ENCODE measurements at regions of chr19 and their contacts with region 1.

Region 1: GRCh38 chr19:29665215-29665825 is at the start of gene PLEKHF1:
- DNase-seq: peak; percentile 86
- H3K4me3 Mint-ChIP-seq: peak within 1 kb of the TSS; percentile 85
- H3K27ac Mint-ChIP-seq: peak within 1 kb of the TSS; percentile 61
- H3K4me1 Mint-ChIP-seq: peaks cover 62% of the 10 kb centered on the region
- H3K27me3 Mint-ChIP-seq: no peaks in the 10 kb centered on the region
- total RNA-seq, gene PLEKHF1: 28.0 and 30.3 TPM in 2 replicates

Region 2: DNA sequence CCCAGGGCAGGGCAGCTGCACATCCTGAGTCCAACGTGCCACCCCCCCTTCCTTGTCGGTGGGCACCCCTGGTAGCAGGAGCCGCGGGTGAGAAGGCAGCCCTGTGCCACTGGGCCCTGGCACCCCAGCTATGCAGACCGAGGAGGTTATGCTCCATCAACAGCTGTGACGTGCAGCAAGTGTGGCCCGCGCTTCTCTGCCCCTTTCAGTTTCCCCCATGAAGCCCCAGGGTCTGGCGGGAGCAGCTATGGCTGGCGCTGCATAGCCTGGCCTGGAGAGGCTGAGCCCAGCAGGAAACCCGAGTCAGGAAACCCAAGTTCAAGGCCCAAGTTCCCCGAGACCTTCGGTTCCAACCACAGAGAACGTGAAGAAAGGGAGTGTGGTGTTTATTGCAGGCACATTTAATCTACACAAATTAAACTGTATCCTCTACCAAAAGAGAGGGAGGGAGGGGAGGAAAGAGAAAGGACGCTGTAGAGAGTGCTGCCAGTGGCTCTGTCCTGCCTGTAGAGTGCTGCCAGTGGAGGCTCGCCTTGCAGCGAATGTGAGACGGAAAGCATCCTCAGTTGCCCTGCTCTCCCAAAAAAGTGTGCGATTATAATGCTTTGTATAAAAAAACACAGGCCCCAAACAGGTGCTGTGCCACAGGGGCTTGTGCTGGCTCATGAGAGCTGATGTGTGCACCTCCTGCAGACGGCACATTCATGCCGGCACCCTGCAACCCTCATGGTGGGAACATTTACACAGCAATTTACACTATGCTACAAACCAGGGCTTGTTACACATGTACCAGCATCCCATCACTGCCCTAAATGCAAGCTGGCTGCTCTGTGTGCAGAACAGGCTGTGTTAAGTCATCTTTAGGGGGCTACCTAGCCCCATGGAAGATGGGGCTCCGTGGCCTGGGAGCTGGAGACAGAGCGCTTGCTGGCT is 42.9 kb before region 1 on chr19:
- intact Hi-C with region 1: loop called (anchors 1 kb)
- DNase-seq: no peak
- H3K4me3 Mint-ChIP-seq: no peak overlapping the region
- H3K27ac Mint-ChIP-seq: peak overlapping the region; percentile 38
- H3K4me1 Mint-ChIP-seq: peaks cover 46% of the 10 kb centered on the region
- H3K27me3 Mint-ChIP-seq: no peaks in the 10 kb centered on the region

Region 3: DNA sequence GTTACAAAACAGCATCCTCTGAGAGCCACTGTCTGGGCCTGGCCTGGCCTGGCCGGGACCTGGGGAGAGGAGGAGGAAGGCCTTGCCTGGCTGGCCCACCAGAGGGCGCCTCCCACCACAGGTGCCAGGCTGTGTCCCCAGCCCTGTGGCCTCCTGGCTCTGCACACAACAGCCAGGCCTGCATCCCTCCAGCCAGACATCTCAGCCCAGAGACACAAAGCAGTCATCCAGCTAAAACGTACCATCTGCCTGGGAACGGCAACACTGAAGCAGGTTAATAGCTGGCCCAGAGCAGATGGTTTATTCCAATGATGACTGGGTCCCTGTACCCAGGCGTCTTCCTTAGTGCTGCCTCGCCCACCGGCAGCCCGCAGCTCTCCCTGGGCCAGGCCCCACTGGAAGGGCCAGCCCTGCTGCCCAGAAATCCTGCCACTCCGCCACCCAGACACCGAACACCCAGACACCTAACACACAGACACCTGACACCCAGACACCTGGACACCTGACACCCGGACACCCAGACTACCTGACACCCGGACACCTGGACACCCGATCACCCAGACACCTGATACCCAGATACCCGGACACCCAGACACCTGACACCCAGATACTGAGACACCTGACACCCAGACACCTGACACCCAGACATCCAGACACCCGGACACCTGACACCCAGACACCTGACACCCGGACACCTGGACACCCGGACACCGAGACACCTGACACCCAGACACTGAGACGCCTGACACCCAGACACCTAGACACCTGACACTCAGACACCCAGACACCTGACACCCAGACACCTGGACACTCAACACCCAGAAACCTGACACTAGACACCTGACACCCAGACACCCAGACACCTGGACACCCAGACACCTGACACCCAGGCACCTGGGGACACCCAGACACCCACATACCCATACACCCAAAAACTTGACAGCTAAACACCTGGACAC is 29.6 kb after region 1 on chr19:
- intact Hi-C with region 1: loop called (anchors 1 kb)
- DNase-seq: peak; percentile 71
- H3K4me3 Mint-ChIP-seq: no peak overlapping the region
- H3K27ac Mint-ChIP-seq: no peak overlapping the region
- H3K4me1 Mint-ChIP-seq: peaks cover 8% of the 10 kb centered on the region
- H3K27me3 Mint-ChIP-seq: no peaks in the 10 kb centered on the region

Region 4: DNA sequence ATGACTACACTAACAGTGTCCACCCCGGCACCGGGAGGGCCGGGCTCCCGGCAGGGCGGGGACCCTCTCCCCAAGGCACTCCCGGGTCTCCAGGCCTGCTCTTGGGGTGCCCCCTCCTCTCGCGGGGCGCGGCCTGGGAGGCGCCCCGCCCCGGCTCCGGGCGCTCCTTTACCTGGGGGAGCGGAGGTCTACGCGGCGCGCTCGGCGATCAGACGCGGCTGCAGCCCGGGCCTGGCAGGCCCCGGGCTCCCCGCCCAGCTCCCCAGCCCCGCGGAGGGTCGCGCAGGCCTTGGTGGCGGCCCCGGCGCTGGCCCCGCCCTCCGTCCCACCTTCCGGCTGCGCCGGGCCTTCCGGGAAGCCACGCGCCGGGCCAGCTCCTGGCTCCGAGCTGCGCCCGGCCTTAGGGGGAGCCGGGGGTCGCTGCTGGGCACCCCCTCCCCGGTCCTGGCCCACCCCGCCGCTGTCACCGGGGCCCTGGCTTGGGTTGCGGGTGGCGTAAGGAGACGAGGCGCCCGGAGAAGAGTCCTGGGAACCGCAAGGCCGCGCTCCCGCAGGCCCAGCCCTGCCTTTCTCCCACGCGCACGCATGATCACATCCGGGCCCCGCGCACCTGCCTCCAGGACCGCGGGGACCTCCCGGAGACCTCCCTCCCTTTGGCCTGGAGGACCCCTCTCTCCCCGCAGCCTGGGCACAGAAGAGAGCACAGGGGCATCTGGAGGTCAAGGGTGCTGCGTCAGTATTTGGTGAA is 49.8 kb after region 1 on chr19 and contains the start of gene C19orf12:
- intact Hi-C with region 1: loop called (anchors 1 kb)
- DNase-seq: peak; percentile 71
- H3K4me3 Mint-ChIP-seq: peak within 1 kb of the TSS; percentile 94
- H3K27ac Mint-ChIP-seq: peak within 1 kb of the TSS; percentile 94
- H3K4me1 Mint-ChIP-seq: peaks cover 45% of the 10 kb centered on the region
- H3K27me3 Mint-ChIP-seq: no peaks in the 10 kb centered on the region
- total RNA-seq, gene C19orf12: 41.9 and 42.2 TPM in 2 replicates

Region 5: GRCh38 chr19:29941828-29942403 is 276.6 kb after region 1 on chr19 and contains the start of gene URI1:
- intact Hi-C with region 1: loop called (anchors 10 kb)
- DNase-seq: peak; percentile 90
- H3K4me3 Mint-ChIP-seq: peak within 1 kb of the TSS; percentile 90
- H3K27ac Mint-ChIP-seq: peak within 1 kb of the TSS; percentile 88
- H3K4me1 Mint-ChIP-seq: peaks cover 38% of the 10 kb centered on the region
- H3K27me3 Mint-ChIP-seq: no peaks in the 10 kb centered on the region
- total RNA-seq, gene URI1: 55.6 and 56.8 TPM in 2 replicates

Measured in activated T-helper 2 cell treated with anti-CD3 and anti-CD28 coated beads, Interferon-gamma antibody, Interleukin-2, Interleukin-4, amounts not matched to agents 10 μg/mL and 5 μg/mL and 100 μg/mL, durations not matched to agents 14 hours and 24 hours and 36 hours (primary cell).